ENCODE measurements at regions of chr16 and their contacts with region 1.

Region 1: DNA sequence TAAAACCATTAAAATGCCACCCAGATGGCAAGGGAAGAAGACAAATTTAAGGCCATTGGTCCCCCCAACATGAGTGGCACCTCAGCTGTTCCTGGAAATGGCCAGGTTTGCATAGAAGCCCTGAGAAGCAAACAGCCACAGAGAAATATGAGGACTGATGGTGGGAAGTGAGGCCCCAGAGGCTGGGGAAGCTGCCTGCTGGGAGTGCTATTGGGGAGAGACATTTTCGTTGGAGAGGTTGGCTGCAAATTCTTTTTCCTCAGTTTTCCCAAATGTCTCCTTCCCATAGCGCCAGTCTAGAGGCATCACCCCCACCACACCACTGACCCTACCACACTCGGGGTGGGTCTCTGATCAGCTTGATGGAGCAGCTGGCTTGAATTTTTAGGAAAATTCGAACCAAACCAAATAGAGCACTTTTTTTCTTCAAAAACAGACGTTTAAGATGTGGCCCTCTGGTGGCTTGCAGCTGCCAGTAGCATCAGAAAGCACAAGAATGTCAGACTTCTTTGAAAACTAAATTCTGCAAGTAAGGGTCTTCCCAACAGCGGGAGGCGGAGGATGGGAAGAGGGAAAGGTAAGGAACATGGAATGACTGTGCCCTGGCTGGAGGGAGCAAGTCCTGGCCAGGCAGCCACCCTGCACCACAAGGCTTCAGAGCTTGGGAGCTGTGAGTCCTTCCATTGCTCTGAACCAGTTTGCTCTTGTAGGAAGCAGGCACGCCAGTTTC is 13.2 kb upstream of the SLC12A3 start:
- DNase-seq: peak; percentile 50
- ATAC-seq: no peak
- H3K4me3 ChIP-seq: no peak overlapping the region
- H3K27ac ChIP-seq: no peak overlapping the region
- H3K4me1 ChIP-seq: peaks cover 33% of the 10 kb centered on the region
- H3K27me3 ChIP-seq: no peaks in the 10 kb centered on the region
- CTCF ChIP-seq: peak; percentile 60
- POLR2A ChIP-seq: no peak
- RAD21 ChIP-seq: peak; percentile 43

Region 2: DNA sequence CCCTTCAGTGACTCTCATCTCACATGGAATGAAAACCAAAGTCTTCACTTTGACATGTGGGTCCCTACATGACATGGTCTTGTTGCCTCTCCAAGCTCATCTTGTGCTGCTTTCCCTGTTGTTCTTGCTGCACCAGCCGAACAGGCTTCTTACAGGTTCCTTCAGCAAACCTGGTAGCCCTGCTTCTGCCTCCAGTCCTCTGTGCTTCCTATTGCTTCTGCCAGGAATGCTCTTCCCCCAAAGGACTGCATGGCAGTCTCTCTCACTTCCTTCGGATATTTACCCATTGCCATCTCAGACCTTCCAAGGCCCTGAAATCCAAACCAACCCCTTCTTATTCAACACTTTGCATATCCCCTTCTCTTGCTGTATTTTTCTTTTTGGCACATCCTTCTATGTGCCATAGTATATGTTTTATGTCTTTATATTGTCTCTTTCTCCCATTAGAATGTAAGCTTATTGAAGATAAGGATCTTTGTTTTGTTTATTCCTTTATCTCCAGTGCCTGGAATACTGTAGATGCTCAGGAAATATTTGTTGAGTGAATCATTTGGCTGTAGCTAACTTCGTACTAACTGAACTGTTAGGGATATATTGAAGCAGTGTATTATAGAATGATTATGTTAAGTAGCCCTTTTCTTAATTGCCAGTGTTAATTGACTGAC is 44.7 kb before region 1 on chr16:
- CTCF ChIA-PET with region 1: no interaction called
- POLR2A ChIA-PET with region 1: no interaction called
- dilution Hi-C with region 1: no loop called
- in situ Hi-C with region 1: no loop called
- intact Hi-C with region 1: loop called (anchors 5 kb)
- DNase-seq: peak; percentile 84
- ATAC-seq: peak; percentile 95
- H3K4me3 ChIP-seq: no peak overlapping the region
- H3K27ac ChIP-seq: peak overlapping the region; percentile 63
- H3K4me1 ChIP-seq: peaks cover 14% of the 10 kb centered on the region
- H3K27me3 ChIP-seq: no peaks in the 10 kb centered on the region
- CTCF ChIP-seq: no peak
- POLR2A ChIP-seq: no peak
- RAD21 ChIP-seq: no peak